Activated B cell treated with CpG ODN at 0.5 μM for 24 hours (primary cell): ENCODE measurements at regions of chr5 and their contacts with region 1.

Region 1: DNA sequence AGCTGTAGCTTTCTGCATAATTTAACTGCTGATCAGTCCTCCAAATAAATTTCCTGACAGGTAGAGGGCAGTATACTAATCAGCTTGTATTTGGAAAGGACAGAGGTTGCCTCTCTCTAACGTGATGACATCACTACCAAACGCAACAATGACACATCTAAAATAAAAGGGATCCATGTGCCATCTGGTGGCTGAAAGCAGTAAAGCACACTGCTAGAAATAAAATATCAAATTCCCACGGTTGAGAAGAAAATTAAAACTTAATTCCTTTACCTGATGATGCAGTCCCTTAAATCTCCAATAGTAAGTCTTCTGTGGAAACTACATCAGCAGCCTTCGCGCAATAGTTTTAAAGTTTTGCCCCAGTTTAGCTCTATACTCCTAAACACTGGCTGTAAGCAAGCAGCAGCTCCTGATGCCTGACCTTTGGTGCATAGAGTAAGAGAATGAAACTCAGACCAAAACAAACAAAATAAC is 54.5 kb downstream of the DIAPH1 start:
- DNase-seq: no peak
- ATAC-seq: peak; percentile 98
- H3K4me3 Mint-ChIP-seq: no peak overlapping the region
- H3K27ac Mint-ChIP-seq: peak overlapping the region; percentile 80
- H3K4me1 Mint-ChIP-seq: peaks cover 7% of the 10 kb centered on the region
- H3K27me3 Mint-ChIP-seq: no peaks in the 10 kb centered on the region
- CTCF ChIP-seq: peak; percentile 92

Region 2: DNA sequence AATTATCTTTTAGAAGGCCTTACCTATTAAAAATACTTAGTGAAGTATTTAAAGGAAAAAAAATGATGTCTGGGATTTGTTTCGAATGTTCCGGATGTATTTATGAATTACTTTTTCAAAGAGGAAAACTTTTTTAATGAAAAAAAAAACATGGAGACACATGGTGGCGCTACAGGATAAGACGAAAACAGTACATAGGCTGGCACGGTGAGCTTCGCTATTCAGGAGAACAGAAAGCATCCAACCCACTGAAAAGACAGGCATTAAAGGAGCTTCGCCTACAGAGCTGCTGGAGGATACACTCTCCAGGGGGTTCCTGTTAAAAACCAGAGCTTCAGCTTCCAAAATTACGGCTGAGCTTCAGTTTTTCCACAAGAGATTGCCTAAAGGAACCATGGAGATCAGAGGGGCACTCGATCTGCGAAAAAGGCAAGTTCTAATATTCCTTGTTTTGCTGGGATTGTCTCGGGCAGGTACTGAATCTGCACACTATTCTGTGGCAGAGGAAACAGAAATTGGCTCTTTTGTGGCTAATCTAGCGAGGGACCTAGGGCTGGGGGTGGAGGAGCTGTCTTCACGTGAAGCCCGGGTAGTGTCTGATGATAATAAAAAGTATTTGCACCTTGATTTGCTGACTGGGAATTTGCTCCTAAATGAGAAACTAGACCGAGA is 341.0 kb before region 1 on chr5 and contains the start of gene PCDHB14:
- CTCF ChIA-PET with region 1: interaction called, 11 read pairs
- POLR2A ChIA-PET with region 1: no interaction called
- intact Hi-C with region 1: loop called (anchors 2 kb)
- DNase-seq: no peak
- ATAC-seq: no peak
- H3K4me3 Mint-ChIP-seq: no peak within 1 kb of the TSS
- H3K27ac Mint-ChIP-seq: no peak within 1 kb of the TSS
- H3K4me1 Mint-ChIP-seq: peaks cover 2% of the 10 kb centered on the region
- H3K27me3 Mint-ChIP-seq: peaks cover 27% of the 10 kb centered on the region
- CTCF ChIP-seq: no peak
- total RNA-seq, gene PCDHB14: 0.11 TPM in 1 of 2 replicates, not detected in the other

Region 3: GRCh38 chr5:141359790-141360426 is 204.3 kb before region 1 on chr5 and contains the start of gene PCDHGB2:
- CTCF ChIA-PET with region 1: interaction called, 5 read pairs
- POLR2A ChIA-PET with region 1: no interaction called
- intact Hi-C with region 1: loop called (anchors 1 kb)
- DNase-seq: no peak
- ATAC-seq: no peak
- H3K4me3 Mint-ChIP-seq: peak within 1 kb of the TSS; percentile 79
- H3K27ac Mint-ChIP-seq: peak within 1 kb of the TSS; percentile 60
- H3K4me1 Mint-ChIP-seq: peaks cover 8% of the 10 kb centered on the region
- H3K27me3 Mint-ChIP-seq: peaks cover 59% of the 10 kb centered on the region
- CTCF ChIP-seq: no peak
- total RNA-seq, gene PCDHGB2: 2.2 and 2.6 TPM in 2 replicates

Region 4: GRCh38 chr5:141420855-141421496 is 143.3 kb before region 1 on chr5 and contains the start of gene PCDHGA11:
- CTCF ChIA-PET with region 1: interaction called, 23 read pairs
- POLR2A ChIA-PET with region 1: interaction called, 3 read pairs
- intact Hi-C with region 1: loop called (anchors 1 kb)
- DNase-seq: no peak
- ATAC-seq: peak; percentile 69
- H3K4me3 Mint-ChIP-seq: peak within 1 kb of the TSS; percentile 85
- H3K27ac Mint-ChIP-seq: no peak within 1 kb of the TSS
- H3K4me1 Mint-ChIP-seq: peaks cover 9% of the 10 kb centered on the region
- H3K27me3 Mint-ChIP-seq: peaks cover 50% of the 10 kb centered on the region
- CTCF ChIP-seq: no peak
- total RNA-seq, gene PCDHGA11: 0.73 and 1.1 TPM in 2 replicates

Region 5: DNA sequence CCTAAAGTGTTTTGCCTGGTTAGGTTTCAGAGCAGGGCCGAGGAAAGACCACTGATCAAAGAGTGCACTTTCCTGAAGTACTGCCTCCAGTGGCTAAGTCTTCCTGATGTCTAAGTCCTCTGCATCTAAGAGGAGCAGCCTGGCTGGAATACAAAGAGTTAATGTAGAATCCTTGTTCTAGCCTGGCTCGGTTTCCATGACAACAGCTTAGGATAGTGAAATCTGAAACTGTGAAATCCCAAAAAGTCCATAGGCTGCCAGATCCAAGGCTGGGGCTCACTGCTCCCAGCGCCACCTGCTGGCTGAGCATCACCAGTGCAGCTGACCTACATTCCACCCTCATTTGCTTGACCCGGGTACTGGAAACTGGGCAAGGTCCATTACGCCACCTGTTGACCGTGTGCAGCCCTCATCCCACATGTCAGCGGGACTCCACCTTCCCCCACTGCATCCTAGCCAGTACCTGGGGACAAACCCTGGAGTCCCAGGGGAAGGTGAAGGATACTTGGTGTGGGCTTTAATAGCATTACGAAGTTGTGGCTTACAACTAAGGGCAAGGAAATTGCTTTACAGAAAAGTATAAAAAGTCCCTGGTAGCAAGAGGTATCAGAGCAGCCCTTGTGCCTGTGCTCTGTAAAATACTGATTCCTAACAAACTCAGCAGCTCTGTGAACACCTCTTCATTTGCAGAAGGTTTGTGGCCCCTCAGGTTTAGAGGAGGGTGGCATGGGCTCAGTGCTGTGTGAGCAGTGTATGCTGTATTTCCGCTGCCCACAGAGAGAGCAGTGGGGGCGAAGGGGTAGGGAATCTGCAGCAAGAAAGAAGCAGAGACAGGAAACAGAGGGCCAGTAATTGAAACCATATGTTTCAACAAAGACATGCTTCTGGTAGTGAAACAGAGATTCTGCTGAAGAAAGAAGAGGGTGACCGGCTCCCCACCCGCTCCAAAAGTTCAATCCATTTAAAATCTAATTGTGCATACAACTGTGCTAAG is 39.4 kb before region 1 on chr5:
- CTCF ChIA-PET with region 1: interaction called, 19 read pairs
- POLR2A ChIA-PET with region 1: no interaction called
- intact Hi-C with region 1: no loop called
- DNase-seq: peak; percentile 50
- ATAC-seq: peak; percentile 88
- H3K4me3 Mint-ChIP-seq: no peak overlapping the region
- H3K27ac Mint-ChIP-seq: no peak overlapping the region
- H3K4me1 Mint-ChIP-seq: peaks cover 26% of the 10 kb centered on the region
- H3K27me3 Mint-ChIP-seq: no peaks in the 10 kb centered on the region
- CTCF ChIP-seq: peak; percentile 98

Region 6: GRCh38 chr5:142152384-142152732 is 588.1 kb after region 1 on chr5:
- CTCF ChIA-PET with region 1: no interaction called
- POLR2A ChIA-PET with region 1: no interaction called
- intact Hi-C with region 1: no loop called
- DNase-seq: no peak
- ATAC-seq: no peak
- H3K4me3 Mint-ChIP-seq: no peak overlapping the region
- H3K27ac Mint-ChIP-seq: no peak overlapping the region
- H3K4me1 Mint-ChIP-seq: no peaks in the 10 kb centered on the region
- H3K27me3 Mint-ChIP-seq: no peaks in the 10 kb centered on the region
- CTCF ChIP-seq: no peak